Uterus (tissue), 4 donors: ENCODE measurements at regions of chr7 and their contacts with region 1.

Region 1: DNA sequence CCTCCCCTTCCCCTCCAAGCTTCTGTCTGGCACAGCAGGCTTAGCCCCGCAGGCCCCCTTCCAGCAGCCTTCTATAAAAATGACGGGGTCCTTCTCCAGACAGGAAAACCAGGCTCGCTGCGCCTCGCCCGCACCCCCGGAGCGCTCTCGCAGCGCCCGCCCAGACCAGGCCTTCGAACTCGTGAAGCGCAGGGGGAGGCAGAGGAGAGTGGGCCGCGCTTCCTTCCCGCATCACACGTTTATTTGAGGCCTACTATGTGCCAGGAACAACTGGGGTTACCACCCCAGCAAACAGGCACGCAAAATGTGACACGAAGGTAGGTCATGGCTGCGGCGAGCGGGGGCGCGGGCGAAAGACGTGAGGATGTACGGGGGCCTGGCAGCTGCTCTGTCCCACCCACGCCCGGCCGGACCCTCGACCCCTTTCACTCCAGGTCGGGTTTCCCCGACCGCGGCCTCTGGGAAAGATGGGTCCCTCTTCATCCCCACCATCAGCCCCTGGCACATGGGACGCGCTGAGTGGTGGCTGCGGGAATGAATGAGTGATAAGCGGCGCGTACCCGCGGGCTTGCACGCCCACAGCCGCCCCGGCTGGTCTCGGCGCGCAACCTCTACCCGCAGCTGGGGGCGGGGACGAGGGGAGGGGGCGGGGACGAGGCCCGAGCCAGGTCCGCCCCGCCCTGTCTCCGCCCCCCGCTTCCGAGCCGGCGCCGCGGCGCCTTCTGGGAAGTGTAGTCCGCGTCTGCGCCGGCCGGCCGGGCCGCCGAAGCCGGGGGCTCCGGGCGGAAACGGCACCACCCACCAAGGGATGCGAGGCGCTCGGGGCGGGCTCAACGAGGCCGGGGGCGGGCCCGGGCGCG is 59.1 kb downstream of the ZNF467 start:
- DNase-seq: peak; percentile 89 to 92
- H3K4me3 ChIP-seq: peak overlapping the region; percentile 53 to 76
- H3K27ac ChIP-seq: peak overlapping the region; percentile 66 to 86
- H3K4me1 ChIP-seq: no peaks in the 10 kb centered on the region
- H3K27me3 ChIP-seq: no peaks in the 10 kb centered on the region
- CTCF ChIP-seq: no peak
- POLR2A ChIP-seq: no peak

Region 2: GRCh38 chr7:149771721-149772240 is 57.5 kb after region 1 on chr7:
- intact Hi-C with region 1: loop called (anchors 5 kb)
- DNase-seq: peak; percentile 90 to 94
- H3K4me3 ChIP-seq: peak overlapping the region; percentile 48 to 78
- H3K27ac ChIP-seq: peak overlapping the region; percentile 69 to 73
- H3K4me1 ChIP-seq: no peaks in the 10 kb centered on the region
- H3K27me3 ChIP-seq: no peaks in the 10 kb centered on the region
- CTCF ChIP-seq: no peak
- POLR2A ChIP-seq: peak in 1 of 2 donors; percentile 52